ENCODE measurements at regions of chr7 and their contacts with region 1.

Region 1: GRCh38 chr7:143214789-143215679 is 6.8 kb upstream of the TAS2R40 start:
- DNase-seq: peak; percentile 85

Region 2: GRCh38 chr7:142853739-142854371 is 361.2 kb before region 1 on chr7:
- in situ Hi-C with region 1: loop called (anchors 25 kb)
- DNase-seq: peak; percentile 16

Region 3: DNA sequence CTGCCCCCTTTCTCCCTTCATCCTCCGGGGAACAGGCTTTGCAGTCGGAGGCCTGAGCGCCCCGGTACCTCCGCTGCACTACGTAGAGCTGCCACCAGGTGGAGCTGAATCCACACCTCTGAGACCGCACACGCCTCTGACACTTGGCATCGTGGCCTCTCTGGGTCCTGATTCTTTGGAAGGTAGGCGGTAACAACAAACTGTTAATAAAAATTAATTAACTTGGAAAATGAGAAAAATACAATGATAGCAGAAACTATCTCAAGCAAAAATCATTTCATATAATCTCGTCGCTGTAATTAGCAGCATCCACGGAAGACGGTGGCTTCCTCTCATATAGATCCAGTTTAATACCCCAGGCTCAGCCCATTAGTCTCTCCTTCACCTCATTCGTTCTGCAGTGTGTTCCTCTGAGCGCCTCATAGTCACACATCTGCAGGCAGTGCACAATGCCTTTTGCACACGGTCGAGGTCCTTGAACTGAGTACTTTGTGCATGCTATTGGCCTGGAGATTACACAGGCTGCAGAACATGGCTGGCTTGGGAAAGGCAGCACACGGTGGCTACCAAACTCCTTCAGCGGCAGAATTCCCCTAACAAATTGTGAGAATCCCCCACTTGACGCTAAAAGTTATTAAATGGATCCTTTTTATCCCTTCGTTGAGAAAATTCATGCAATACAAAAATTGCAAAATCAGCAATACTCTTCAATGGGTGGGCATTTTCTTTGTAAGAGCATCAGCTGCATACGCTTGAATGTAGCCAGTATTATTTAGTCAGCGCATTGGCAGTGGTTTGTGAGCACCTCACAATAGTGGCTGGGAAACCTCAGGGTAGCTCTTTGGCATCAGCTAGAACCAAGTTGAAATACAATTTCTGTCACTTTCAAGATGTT is 206.8 kb before region 1 on chr7:
- in situ Hi-C with region 1: loop called (anchors 25 kb)
- DNase-seq: peak; percentile 51